ENCODE measurements at regions of chr2 and their contacts with region 1.

Region 1: GRCh38 chr2:54422072-54422581 is 34.0 kb upstream of the SPTBN1 start:
- DNase-seq: no peak
- ATAC-seq: no peak

Region 2: DNA sequence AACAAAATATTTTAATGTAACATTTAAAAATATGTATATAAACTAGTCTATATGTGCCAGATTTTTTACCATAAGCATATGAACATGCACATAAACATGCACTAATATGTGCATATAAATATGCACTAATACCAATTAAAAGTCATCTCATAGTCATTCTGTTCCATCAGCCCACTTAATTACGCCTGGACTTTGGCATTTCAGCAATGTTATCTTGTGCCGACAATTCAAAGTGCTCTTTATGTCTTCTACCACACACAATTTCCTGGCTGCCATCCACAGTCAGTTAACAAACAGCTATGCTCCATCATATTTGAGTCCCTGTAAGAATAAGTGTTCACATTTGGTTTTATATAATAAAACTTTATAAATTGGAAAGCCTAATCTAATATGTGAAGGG is 73.5 kb before region 1 on chr2:
- intact Hi-C with region 1: no loop called
- DNase-seq: peak; percentile 57
- ATAC-seq: peak in 1 of 2 donors; percentile 56

Region 3: GRCh38 chr2:54370405-54371104 is 51.6 kb before region 1 on chr2:
- intact Hi-C with region 1: loop called in 1 of 2 experiments (anchors 5 kb)
- DNase-seq: peak; percentile 74
- ATAC-seq: peak; percentile 41 to 78

Region 4: DNA sequence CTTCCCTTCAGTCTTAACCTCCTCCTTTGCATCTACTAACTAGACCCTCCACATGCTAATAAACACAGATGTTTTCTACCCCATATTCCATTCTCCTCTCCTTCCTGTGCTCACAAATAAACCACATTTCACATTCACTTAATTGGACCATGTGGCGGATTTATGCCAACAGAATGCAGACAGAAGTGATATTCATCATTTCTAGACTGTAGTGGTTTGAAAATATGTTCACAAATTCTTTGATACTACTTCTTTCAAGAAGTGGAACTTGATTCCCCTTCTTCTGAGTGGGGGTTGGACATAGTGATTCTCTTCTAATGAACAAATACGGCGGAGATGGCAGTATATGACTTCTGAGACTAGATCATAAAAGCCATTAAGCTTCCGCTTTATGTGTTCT is 39.5 kb before region 1 on chr2:
- intact Hi-C with region 1: loop called in 1 of 2 experiments (anchors 2 kb)
- DNase-seq: no peak
- ATAC-seq: no peak